Naive thymus-derived CD4-positive, alpha-beta T cell (primary cell): ENCODE measurements at regions of chr2 and their contacts with region 1.

Region 1: GRCh38 chr2:231642631-231643494 is 50.2 kb downstream of the TEX44 start:
- DNase-seq: peak in 4 of 9 donors; percentile 16 to 78 (median 44)
- ATAC-seq: peak; percentile 79
- H3K4me3 ChIP-seq: peak overlapping the region; percentile 25
- H3K4me3 Mint-ChIP-seq: peak overlapping the region; percentile 33 to 84 (median 74)
- H3K27ac ChIP-seq: no peak overlapping the region
- H3K27ac Mint-ChIP-seq: peak overlapping the region in 8 of 9 donors; percentile 48 to 94 (median 64)
- H3K4me1 ChIP-seq: peaks cover 0 to 8% of the 10 kb centered on the region in 2 donors
- H3K4me1 Mint-ChIP-seq: peaks cover 8 to 39% (median 11%) of the 10 kb centered on the region in 7 donors
- H3K27me3 ChIP-seq: no peaks in the 10 kb centered on the region
- H3K27me3 Mint-ChIP-seq: no peaks in the 10 kb centered on the region

Region 2: DNA sequence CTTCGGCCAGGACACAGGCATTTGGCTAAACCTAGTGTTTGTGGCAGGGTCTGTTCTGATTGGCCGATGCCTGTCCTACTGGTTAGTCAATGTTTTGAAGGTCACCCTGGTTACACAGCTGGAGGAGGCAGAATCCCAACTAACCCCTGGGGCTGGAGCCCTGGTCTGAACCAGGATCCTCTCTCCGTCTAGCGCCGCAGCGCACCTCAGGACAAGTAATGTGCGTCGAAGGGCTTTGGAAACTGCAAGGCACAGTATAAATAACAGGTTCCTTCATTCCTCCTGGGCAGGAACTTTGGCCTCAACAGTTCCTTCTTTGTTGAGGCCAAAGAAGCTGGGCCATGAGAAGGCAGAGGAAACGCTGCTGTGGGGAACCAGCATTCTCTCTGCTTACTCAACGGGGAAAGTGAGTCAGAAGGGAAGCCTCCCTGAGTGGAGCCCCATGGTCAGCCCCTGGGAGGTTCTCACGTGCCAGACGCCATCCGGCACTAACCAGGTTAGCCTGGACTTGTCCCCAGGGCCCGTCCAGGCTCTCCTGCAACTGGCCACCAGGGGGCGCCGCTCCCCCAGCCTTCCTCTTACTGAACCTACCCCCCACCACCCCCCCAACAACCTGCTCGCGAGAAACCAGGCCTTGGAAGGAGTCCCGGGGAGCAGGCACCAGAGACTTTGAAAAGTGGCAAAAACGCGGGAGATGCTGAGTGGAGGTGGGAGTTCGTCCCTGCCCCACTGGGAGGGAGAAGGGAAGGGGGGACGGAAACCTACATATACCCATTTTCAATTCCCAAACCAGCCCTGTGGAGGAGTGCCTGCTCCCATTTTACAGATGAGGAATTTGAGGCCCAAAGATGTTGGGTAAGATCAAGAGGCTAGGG is 30.4 kb before region 1 on chr2:
- CTCF ChIA-PET with region 1: interaction called, 6 read pairs
- POLR2A ChIA-PET with region 1: no interaction called
- intact Hi-C with region 1: loop called (anchors 1 to 2 kb)
- DNase-seq: peak; percentile 70 to 95 (median 84)
- ATAC-seq: peak; percentile 88
- H3K4me3 ChIP-seq: peak overlapping the region; percentile 63
- H3K4me3 Mint-ChIP-seq: peak overlapping the region; percentile 65 to 96 (median 86)
- H3K27ac ChIP-seq: no peak overlapping the region
- H3K27ac Mint-ChIP-seq: peak overlapping the region in 7 of 9 donors; percentile 38 to 99 (median 69)
- H3K4me1 ChIP-seq: peaks cover 13 to 19% of the 10 kb centered on the region in 2 donors
- H3K4me1 Mint-ChIP-seq: peaks cover 7 to 51% (median 31%) of the 10 kb centered on the region in 7 donors
- H3K27me3 ChIP-seq: no peaks in the 10 kb centered on the region
- H3K27me3 Mint-ChIP-seq: no peaks in the 10 kb centered on the region

Region 3: DNA sequence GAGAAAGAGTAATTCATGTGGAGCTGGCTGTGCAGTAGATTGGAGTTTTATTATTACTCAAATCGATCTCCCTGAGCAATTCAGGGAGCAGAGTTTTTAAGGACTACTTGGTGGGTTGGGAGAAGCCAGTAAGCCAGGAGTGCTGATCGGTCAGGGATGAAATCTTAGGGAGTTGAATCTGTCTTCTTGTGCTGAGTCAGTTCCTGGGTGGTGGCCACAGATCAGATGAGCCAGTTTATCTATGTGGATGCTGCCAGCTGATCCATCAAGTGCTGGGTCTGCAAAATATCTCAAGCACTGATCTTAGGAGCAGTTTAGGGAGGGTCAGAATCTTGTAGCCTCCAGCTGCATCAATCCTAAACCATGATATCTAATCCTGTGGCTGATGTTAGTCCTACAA is 1957.5 kb after region 1 on chr2:
- CTCF ChIA-PET with region 1: no interaction called
- POLR2A ChIA-PET with region 1: no interaction called
- intact Hi-C with region 1: no loop called
- DNase-seq: no peak
- ATAC-seq: no peak
- H3K4me3 ChIP-seq: no peak overlapping the region
- H3K4me3 Mint-ChIP-seq: no peak overlapping the region
- H3K27ac ChIP-seq: no peak overlapping the region
- H3K27ac Mint-ChIP-seq: no peak overlapping the region
- H3K4me1 ChIP-seq: no peaks in the 10 kb centered on the region
- H3K4me1 Mint-ChIP-seq: no peaks in the 10 kb centered on the region
- H3K27me3 ChIP-seq: no peaks in the 10 kb centered on the region
- H3K27me3 Mint-ChIP-seq: peaks cover 13 to 34% (median 19%) of the 10 kb centered on the region in 5 donors